Naive thymus-derived CD4-positive, alpha-beta T cell (primary cell): ENCODE measurements at regions of chr2 and their contacts with region 1.

Region 1: DNA sequence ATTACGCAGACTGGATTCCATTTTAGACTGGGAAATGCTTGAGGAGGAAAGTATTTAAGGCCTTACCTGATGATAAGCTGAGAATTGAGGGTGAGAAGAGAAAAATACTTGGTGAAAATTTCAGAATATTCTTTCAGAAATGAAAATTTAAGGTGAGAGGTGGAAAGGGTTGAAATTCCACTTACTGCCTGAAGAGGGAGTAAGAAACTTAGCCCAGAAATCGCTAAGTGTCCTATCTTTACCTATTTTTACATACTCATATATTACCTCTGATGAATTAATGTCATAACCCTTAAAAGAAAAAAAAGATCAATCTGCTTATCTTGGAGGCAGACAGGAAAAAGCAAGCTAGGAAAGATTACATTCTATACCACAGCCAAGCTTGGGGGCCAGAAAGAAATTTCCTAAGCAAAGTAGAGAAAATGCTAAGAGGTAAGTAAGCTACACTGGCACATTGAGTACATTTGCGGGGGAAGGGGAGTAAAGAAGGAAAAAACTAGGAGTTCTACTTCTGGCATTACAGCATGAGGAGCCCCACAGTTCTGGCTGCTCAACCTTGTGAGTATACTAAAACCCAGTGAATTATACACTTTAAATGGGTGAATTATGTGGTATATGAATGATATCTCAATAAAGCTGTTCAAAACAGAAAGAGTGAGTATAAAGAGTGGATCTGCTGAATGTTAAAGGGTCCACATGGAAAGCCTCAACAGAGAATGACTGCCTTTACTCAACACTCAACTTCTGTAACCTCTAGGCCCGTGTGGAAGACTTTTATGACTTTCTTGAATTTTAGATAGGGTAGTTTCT is 33.8 kb downstream of the SMC6 start:
- DNase-seq: peak in 5 of 9 donors; percentile 6 to 29 (median 11)
- ATAC-seq: peak; percentile 52
- H3K4me3 ChIP-seq: no peak overlapping the region
- H3K4me3 Mint-ChIP-seq: no peak overlapping the region
- H3K27ac ChIP-seq: no peak overlapping the region
- H3K27ac Mint-ChIP-seq: peak overlapping the region in 2 of 9 donors; percentile 7 to 29
- H3K4me1 ChIP-seq: no peaks in the 10 kb centered on the region
- H3K4me1 Mint-ChIP-seq: no peaks in the 10 kb centered on the region
- H3K27me3 ChIP-seq: no peaks in the 10 kb centered on the region
- H3K27me3 Mint-ChIP-seq: no peaks in the 10 kb centered on the region

Region 2: DNA sequence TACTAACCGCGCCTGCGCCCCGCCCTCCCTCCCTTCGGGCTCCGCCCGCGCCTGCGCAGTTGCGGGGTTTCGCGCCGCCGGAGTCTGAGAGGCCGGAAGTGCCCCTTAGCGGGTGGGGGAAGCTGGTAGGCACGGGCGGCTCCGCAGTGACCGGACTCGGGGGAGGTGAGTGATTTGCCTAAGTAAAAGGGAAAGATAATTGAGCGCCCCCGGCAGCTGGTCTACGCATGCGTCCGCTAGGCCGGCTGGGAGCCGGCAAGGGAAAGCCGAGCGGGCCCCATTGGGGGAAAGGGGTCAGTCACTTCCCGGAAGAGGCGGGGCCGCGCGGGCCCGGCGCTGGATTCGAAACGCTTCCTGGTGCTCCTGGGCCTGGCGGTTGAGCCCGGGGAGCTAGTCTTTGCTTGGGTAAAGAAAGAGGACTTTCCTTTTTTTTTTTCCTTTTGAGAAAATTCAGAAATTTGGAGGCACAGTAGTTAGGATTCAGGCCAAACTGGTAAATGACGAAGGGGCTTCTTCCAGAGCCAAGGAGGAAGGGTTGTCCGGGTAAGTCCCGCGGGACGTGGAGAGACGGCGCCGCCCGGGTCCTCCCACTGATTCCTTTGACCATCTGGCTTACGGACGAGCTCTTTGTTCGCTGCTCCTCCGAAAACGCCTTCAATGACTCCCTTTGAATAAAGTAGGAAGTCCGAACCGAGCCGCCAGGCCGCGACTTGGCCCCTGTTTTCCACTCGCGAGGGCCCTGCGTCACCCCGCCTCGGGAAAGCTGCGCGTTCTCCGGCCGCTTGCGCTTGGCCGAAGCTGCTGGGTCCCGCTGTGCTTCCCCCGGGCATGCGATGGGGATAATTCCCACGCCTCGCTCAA is 34.3 kb after region 1 on chr2 and contains the starts of genes GEN1 and SMC6:
- CTCF ChIA-PET with region 1: no interaction called
- POLR2A ChIA-PET with region 1: no interaction called
- intact Hi-C with region 1: loop called in 1 of 2 experiments (anchors 1 kb)
- DNase-seq: peak; percentile 84 to 98 (median 94)
- ATAC-seq: peak; percentile 91
- H3K4me3 ChIP-seq: peak within 1 kb of the TSS; percentile 89
- H3K4me3 Mint-ChIP-seq: peak within 1 kb of the TSS; percentile 82 to 94 (median 90)
- H3K27ac ChIP-seq: peak within 1 kb of the TSS; percentile 99
- H3K27ac Mint-ChIP-seq: peak within 1 kb of the TSS; percentile 84 to 98 (median 96)
- H3K4me1 ChIP-seq: peaks cover 0 to 10% of the 10 kb centered on the region in 2 donors
- H3K4me1 Mint-ChIP-seq: peaks cover 13 to 48% (median 29%) of the 10 kb centered on the region in 7 donors
- H3K27me3 ChIP-seq: no peaks in the 10 kb centered on the region
- H3K27me3 Mint-ChIP-seq: no peaks in the 10 kb centered on the region
- total RNA-seq, gene GEN1: 5.6 to 25.8 (median 8.0) TPM
- total RNA-seq, gene SMC6: 7.9 to 35.6 (median 14.6) TPM

Region 3: DNA sequence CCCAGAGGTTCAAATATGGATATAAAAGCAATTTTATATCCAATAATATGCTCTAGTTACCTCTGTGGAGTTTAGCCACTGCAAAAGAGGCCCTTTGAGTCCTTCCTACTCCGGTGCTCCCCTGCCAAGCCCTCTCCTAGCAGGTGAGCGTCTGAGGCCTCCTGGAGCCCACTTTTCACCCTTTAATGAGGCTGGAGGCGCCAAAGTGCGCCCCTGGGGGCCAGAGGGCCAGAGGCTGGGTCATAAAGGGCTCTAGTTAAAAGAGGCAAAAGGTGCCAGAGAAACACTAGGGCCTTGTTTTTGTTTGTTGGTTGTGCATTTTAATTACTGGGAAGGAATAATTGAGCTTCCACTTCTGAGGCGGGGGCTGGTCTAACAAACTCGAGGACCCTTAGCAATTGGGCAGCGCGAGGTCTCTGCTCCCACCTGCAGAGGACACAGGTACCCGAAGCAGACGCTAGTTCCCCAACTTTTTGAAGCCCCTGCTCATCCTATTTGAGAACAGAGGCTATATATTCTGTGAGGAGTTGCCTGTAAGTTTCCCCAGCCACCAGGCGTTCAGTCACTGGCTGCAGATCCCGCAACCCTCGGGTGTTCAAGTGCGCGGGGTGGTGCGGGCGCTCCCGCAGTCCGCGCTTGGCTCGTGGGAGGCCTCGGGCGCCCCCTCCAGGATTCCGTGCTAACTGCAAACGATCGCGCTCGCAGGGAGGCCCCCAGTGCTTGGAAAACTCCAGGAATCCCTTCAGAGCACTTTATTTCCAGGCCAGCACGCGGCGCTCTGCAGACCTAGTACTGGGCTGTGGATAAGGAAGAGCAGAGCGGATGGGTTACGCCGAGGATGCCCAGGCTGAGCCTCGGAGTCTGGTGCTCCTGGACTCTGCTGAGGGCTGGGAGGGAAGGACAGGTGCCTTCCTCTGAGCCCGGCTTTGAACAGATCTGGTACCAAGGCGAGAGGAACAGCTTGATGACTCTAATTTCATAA is 110.6 kb after region 1 on chr2:
- CTCF ChIA-PET with region 1: no interaction called
- POLR2A ChIA-PET with region 1: no interaction called
- intact Hi-C with region 1: loop called in 1 of 2 experiments (anchors 1 kb)
- DNase-seq: peak in 5 of 9 donors; percentile 4 to 65 (median 6)
- ATAC-seq: peak; percentile 73
- H3K4me3 ChIP-seq: no peak overlapping the region
- H3K4me3 Mint-ChIP-seq: peak overlapping the region in 2 of 10 donors; percentile 15 to 17
- H3K27ac ChIP-seq: no peak overlapping the region
- H3K27ac Mint-ChIP-seq: no peak overlapping the region
- H3K4me1 ChIP-seq: no peaks in the 10 kb centered on the region
- H3K4me1 Mint-ChIP-seq: peaks cover 0 to 9% (median 0%) of the 10 kb centered on the region in 7 donors
- H3K27me3 ChIP-seq: peaks cover 0 to 11% of the 10 kb centered on the region in 2 donors
- H3K27me3 Mint-ChIP-seq: peaks cover 33 to 48% (median 45%) of the 10 kb centered on the region in 5 donors

Region 4: GRCh38 chr2:17879101-17879912 is 159.5 kb after region 1 on chr2:
- CTCF ChIA-PET with region 1: no interaction called
- POLR2A ChIA-PET with region 1: no interaction called
- intact Hi-C with region 1: no loop called
- DNase-seq: no peak
- ATAC-seq: no peak
- H3K4me3 ChIP-seq: no peak overlapping the region
- H3K4me3 Mint-ChIP-seq: peak overlapping the region; percentile 27 to 86 (median 68)
- H3K27ac ChIP-seq: no peak overlapping the region
- H3K27ac Mint-ChIP-seq: no peak overlapping the region
- H3K4me1 ChIP-seq: no peaks in the 10 kb centered on the region
- H3K4me1 Mint-ChIP-seq: peaks cover 9 to 28% (median 15%) of the 10 kb centered on the region in 7 donors
- H3K27me3 ChIP-seq: peaks cover 0 to 13% of the 10 kb centered on the region in 2 donors
- H3K27me3 Mint-ChIP-seq: peaks cover 60 to 73% (median 69%) of the 10 kb centered on the region in 5 donors

Region 5: GRCh38 chr2:17918789-17919188 is 199.0 kb after region 1 on chr2:
- CTCF ChIA-PET with region 1: no interaction called
- POLR2A ChIA-PET with region 1: no interaction called
- intact Hi-C with region 1: loop called in 1 of 2 experiments (anchors 2 kb)
- DNase-seq: no peak
- ATAC-seq: no peak
- H3K4me3 ChIP-seq: no peak overlapping the region
- H3K4me3 Mint-ChIP-seq: no peak overlapping the region
- H3K27ac ChIP-seq: no peak overlapping the region
- H3K27ac Mint-ChIP-seq: no peak overlapping the region
- H3K4me1 ChIP-seq: no peaks in the 10 kb centered on the region
- H3K4me1 Mint-ChIP-seq: no peaks in the 10 kb centered on the region
- H3K27me3 ChIP-seq: no peaks in the 10 kb centered on the region
- H3K27me3 Mint-ChIP-seq: peaks cover 0 to 15% (median 7%) of the 10 kb centered on the region in 5 donors

Region 6: DNA sequence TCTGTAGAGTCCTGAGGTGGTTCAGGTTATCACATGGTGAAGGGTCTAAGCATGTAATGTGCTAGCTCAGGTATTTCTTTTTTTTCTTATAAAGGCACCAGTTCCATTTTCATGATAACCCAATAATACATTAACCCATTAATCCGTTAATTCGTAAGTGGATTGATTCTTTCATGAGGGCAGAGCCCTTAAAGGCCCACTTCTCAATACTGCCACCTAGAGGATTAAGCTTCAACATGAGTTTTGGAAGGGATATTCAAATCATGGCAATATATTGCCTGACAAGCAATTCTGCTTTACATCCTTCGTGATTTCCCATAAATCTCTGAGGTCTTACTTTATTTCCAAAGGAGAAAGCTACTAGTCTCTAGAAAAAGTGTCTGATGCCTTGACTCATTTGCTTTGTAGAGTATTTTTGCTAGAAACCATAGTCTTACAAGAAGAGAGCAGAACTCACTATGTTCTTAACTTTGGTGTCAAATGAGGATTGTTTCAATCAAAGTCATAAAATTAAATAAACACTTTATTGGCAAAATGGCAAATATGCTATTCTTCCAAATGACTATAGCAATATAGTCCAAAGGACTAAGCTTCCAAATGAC is 430.0 kb after region 1 on chr2:
- CTCF ChIA-PET with region 1: no interaction called
- POLR2A ChIA-PET with region 1: no interaction called
- intact Hi-C with region 1: loop called (anchors 1 kb)
- DNase-seq: no peak
- ATAC-seq: no peak
- H3K4me3 ChIP-seq: no peak overlapping the region
- H3K4me3 Mint-ChIP-seq: no peak overlapping the region
- H3K27ac ChIP-seq: no peak overlapping the region
- H3K27ac Mint-ChIP-seq: no peak overlapping the region
- H3K4me1 ChIP-seq: no peaks in the 10 kb centered on the region
- H3K4me1 Mint-ChIP-seq: no peaks in the 10 kb centered on the region
- H3K27me3 ChIP-seq: no peaks in the 10 kb centered on the region
- H3K27me3 Mint-ChIP-seq: peaks cover 0 to 26% (median 8%) of the 10 kb centered on the region in 5 donors

Region 7: DNA sequence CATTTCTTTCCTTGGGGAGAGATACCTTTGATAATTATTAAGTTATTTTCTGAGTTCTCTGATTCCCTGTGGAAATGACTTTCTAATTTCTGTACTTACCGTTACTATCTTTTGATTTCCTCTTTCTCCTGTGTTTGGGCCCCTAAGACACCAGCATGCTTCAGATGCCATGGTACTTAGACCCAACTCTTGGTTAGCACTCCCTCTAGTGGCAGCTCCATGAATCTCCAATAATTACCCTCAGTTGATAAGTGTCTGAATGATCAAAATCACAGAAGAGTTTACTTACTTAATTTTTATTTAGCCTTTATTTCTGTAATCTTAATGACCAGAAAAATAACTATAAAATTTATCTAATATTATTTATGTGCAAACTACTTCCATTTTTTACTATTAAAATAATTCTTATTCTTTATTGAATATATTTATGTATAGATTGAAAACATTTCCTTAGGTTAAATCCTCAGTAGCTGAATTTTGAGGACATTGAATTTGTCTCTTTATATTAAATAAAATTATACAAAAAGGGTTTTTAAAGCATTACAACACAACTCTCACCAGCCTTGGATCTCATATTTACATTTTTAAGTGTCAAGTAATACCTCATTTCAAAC is 459.1 kb after region 1 on chr2:
- CTCF ChIA-PET with region 1: interaction called, 4 read pairs
- POLR2A ChIA-PET with region 1: no interaction called
- intact Hi-C with region 1: loop called in 1 of 2 experiments (anchors 10 kb)
- DNase-seq: peak in 3 of 9 donors; percentile 7 to 14 (median 9)
- ATAC-seq: no peak
- H3K4me3 ChIP-seq: no peak overlapping the region
- H3K4me3 Mint-ChIP-seq: no peak overlapping the region
- H3K27ac ChIP-seq: no peak overlapping the region
- H3K27ac Mint-ChIP-seq: no peak overlapping the region
- H3K4me1 ChIP-seq: no peaks in the 10 kb centered on the region
- H3K4me1 Mint-ChIP-seq: no peaks in the 10 kb centered on the region
- H3K27me3 ChIP-seq: no peaks in the 10 kb centered on the region
- H3K27me3 Mint-ChIP-seq: peaks cover 0 to 9% (median 1%) of the 10 kb centered on the region in 5 donors

Region 8: GRCh38 chr2:18378020-18378653 is 658.4 kb after region 1 on chr2:
- CTCF ChIA-PET with region 1: no interaction called
- POLR2A ChIA-PET with region 1: no interaction called
- intact Hi-C with region 1: loop called in 1 of 2 experiments (anchors 5 kb)
- DNase-seq: peak in 5 of 9 donors; percentile 9 to 24 (median 20)
- ATAC-seq: peak; percentile 53
- H3K4me3 ChIP-seq: no peak overlapping the region
- H3K4me3 Mint-ChIP-seq: no peak overlapping the region
- H3K27ac ChIP-seq: no peak overlapping the region
- H3K27ac Mint-ChIP-seq: no peak overlapping the region
- H3K4me1 ChIP-seq: no peaks in the 10 kb centered on the region
- H3K4me1 Mint-ChIP-seq: no peaks in the 10 kb centered on the region
- H3K27me3 ChIP-seq: no peaks in the 10 kb centered on the region
- H3K27me3 Mint-ChIP-seq: peaks cover 6 to 21% (median 20%) of the 10 kb centered on the region in 5 donors